Heart right ventricle (tissue), 16 donors: ENCODE measurements at regions of chrX and their contacts with region 1.

Region 1: DNA sequence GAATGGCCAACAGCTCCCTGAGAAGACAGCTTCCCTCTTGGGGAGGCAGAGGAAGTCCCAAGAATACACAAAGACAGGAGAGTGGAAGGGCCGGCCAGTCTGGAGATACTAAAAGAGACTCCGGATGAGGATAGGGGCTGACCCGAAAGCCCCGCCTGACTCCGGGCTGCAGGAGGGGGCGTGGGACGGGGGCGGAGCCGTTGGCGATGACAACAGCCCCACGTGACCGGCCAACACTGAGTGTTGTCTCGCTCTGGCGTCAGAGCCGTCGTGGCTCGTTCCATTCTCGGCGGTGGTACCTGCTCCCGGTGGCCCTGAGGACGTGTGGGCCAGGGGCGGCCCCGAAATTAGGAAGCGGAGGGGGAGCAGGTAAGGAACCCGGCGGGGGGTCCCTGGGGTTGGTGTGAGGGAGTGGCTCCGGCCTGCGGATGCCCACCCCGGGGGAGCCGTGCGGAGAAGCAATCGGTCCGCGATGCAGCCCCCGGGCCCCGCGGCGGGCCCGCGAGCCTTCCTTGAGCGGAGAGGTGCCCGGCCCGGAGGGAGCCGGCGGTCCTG is at the start of gene BEX4:
- DNase-seq: peak; percentile 81 to 83
- ATAC-seq: peak; percentile 97 to 99 (median 98)
- H3K4me3 ChIP-seq: peak within 1 kb of the TSS; percentile 47 to 85 (median 75)
- H3K27ac ChIP-seq: peak within 1 kb of the TSS in 9 of 10 donors; percentile 69 to 88 (median 86)
- H3K4me1 ChIP-seq: no peaks in the 10 kb centered on the region
- H3K27me3 ChIP-seq: peaks cover 0 to 50% (median 0%) of the 10 kb centered on the region in 7 donors
- CTCF ChIP-seq: no peak
- total RNA-seq, gene BEX4: 32.1 to 61.6 (median 46.3) TPM

Region 2: GRCh38 chrX:103092942-103093341 is 122.0 kb before region 1 on chrX and contains the start of gene NXF3:
- intact Hi-C with region 1: no loop called
- DNase-seq: no peak
- ATAC-seq: no peak
- H3K4me3 ChIP-seq: no peak within 1 kb of the TSS
- H3K27ac ChIP-seq: no peak within 1 kb of the TSS
- H3K4me1 ChIP-seq: no peaks in the 10 kb centered on the region
- H3K27me3 ChIP-seq: peaks cover 0 to 23% (median 0%) of the 10 kb centered on the region in 7 donors
- CTCF ChIP-seq: no peak
- total RNA-seq, gene NXF3: 0.14 to 1.3 (median 0.40) TPM in 6 of 10 donors, not detected in the others

Region 3: GRCh38 chrX:103248553-103248952 is 33.6 kb after region 1 on chrX:
- intact Hi-C with region 1: loop called in 8 of 10 experiments (anchors 5 kb)
- DNase-seq: no peak
- ATAC-seq: no peak
- H3K4me3 ChIP-seq: no peak overlapping the region
- H3K27ac ChIP-seq: no peak overlapping the region
- H3K4me1 ChIP-seq: peaks cover 0 to 17% (median 8%) of the 10 kb centered on the region in 9 donors
- H3K27me3 ChIP-seq: peaks cover 0 to 8% (median 0%) of the 10 kb centered on the region in 7 donors
- CTCF ChIP-seq: peak in 8 of 9 donors; percentile 17 to 55 (median 48)

Region 4: DNA sequence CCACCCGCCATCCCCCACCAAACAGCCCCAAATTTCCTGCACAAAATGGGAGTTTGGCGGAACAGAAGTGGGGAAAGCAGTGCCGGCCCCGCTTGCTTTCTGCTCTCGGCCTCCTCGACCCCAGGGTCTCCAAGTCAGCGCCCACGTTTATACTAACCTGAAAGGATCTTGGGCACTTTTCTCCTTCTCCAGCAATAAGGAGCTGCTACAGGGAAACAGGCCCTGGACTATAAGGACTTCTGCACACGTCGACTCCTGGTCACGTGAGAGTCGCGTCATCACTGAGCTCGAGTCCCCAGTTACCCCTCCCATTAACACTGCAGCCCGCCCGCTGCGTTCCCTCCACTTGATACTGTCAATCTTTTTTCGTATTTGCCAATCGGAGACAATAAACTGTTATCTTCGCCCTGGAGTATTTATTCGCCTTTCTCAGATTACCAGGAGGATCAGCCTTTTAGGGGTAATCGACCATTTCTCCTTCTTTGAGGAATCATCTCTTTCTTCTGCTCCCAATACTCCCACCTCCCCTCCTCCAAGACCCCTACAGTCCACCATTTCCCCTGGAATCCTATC is 40.1 kb after region 1 on chrX and contains the start of gene TCEAL8:
- intact Hi-C with region 1: loop called in 5 of 10 experiments (anchors 5 kb)
- DNase-seq: peak; percentile 72 to 84
- ATAC-seq: peak; percentile 94 to 99 (median 97)
- H3K4me3 ChIP-seq: peak within 1 kb of the TSS; percentile 41 to 84 (median 68)
- H3K27ac ChIP-seq: peak within 1 kb of the TSS; percentile 70 to 92 (median 86)
- H3K4me1 ChIP-seq: peaks cover 0 to 21% (median 11%) of the 10 kb centered on the region in 9 donors
- H3K27me3 ChIP-seq: peaks cover 0 to 36% (median 0%) of the 10 kb centered on the region in 7 donors
- CTCF ChIP-seq: no peak
- total RNA-seq, gene TCEAL8: 39.2 to 56.6 (median 51.9) TPM

Region 5: GRCh38 chrX:103343105-103343504 is 128.2 kb after region 1 on chrX:
- intact Hi-C with region 1: loop called in 1 of 10 experiments (anchors 10 kb)
- DNase-seq: peak in 1 of 2 donors; percentile 35
- ATAC-seq: no peak
- H3K4me3 ChIP-seq: no peak overlapping the region
- H3K27ac ChIP-seq: no peak overlapping the region
- H3K4me1 ChIP-seq: no peaks in the 10 kb centered on the region
- H3K27me3 ChIP-seq: peaks cover 0 to 44% (median 0%) of the 10 kb centered on the region in 7 donors
- CTCF ChIP-seq: peak; percentile 47 to 77 (median 69)

Region 6: DNA sequence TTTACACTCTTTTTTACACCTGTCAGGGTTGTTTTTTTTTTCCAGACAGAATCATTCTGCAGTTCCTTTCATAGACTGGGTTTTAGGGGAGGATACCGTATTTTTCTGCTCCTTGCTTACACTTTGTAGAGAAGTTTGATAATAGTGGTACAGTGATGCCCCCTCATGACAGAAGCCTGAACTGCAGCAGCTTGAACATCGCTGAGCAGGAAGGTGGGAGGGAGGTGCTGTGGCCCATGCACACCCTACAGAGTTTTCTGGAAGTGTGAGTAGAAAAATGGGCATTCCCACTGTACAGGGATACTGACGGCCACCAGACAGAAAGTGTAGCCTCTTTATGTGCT is 249.8 kb after region 1 on chrX:
- intact Hi-C with region 1: loop called in 9 of 10 experiments (anchors 2 to 10 kb)
- DNase-seq: peak; percentile 39 to 73
- ATAC-seq: peak; percentile 73 to 96 (median 90)
- H3K4me3 ChIP-seq: peak overlapping the region in 9 of 10 donors; percentile 11 to 47 (median 38)
- H3K27ac ChIP-seq: no peak overlapping the region
- H3K4me1 ChIP-seq: no peaks in the 10 kb centered on the region
- H3K27me3 ChIP-seq: peaks cover 0 to 26% (median 0%) of the 10 kb centered on the region in 7 donors
- CTCF ChIP-seq: peak; percentile 45 to 78 (median 72)